Pancreas (tissue), 10 donors: ENCODE measurements at regions of chr1 and their contacts with region 1.

Region 1: DNA sequence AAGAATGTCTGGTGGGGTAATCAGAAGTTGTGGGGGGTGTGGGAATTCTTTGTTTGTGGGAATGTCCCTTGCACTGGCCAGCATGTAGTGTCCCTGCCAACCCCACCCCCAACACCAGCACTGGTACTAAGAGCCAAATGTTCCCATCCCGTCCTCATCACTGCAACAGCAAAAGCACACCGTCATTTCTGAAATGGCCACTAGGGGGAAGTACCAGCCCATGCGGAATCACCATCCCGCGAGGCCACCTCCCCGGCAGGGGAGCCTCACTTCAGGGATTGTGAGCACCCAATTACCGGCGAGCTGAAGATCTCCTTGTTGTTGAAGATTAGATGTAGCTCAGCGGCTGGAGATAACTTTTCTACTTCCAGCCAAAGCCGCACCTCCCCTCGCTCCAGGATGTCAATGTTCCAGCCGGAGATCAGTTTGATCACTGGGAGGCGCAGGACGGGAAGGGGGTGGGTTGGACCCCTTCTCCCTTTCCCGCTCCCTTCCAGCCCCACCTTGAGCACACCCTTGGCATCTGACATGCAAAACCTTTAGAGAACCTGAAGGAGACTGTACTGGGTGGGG is 41.0 kb downstream of the MYOM3 start:
- DNase-seq: peak in 5 of 6 donors; percentile 70 to 84 (median 74)
- ATAC-seq: peak; percentile 67 to 93 (median 88)
- H3K4me3 ChIP-seq: no peak overlapping the region
- H3K27ac ChIP-seq: no peak overlapping the region
- H3K4me1 ChIP-seq: no peaks in the 10 kb centered on the region
- H3K27me3 ChIP-seq: no peaks in the 10 kb centered on the region
- CTCF ChIP-seq: peak; percentile 66 to 91 (median 80)

Region 2: DNA sequence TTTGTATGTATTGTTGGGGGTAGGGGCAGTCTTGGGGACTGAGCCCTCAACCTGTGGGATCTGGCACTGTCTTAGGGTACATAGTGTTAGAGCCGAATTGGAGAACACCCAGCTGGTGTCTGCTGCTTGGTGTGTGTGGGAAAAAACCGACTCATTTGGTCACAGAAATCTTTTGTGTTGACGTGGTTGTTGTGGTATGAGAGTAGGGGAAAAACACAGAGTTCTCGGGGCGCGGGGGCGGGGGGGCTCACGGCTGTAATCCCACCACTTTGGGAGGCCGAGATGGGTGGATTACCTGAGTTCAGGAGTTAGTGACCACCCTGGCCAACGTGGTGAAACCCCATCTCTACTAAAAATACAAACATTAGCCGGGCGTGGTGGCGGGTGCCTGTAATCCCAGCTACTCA is 75.5 kb before region 1 on chr1:
- intact Hi-C with region 1: no loop called
- DNase-seq: no peak
- ATAC-seq: no peak
- H3K4me3 ChIP-seq: no peak overlapping the region
- H3K27ac ChIP-seq: no peak overlapping the region
- H3K4me1 ChIP-seq: peaks cover 0 to 6% (median 2%) of the 10 kb centered on the region in 3 donors
- H3K27me3 ChIP-seq: no peaks in the 10 kb centered on the region
- CTCF ChIP-seq: no peak

Region 3: GRCh38 chr1:24111996-24112779 is 41.3 kb after region 1 on chr1 and contains the start of gene MYOM3:
- intact Hi-C with region 1: loop called in 2 of 3 experiments (anchors 5 kb)
- DNase-seq: peak; percentile 66 to 89 (median 72)
- ATAC-seq: peak; percentile 59 to 92 (median 84)
- H3K4me3 ChIP-seq: no peak within 1 kb of the TSS
- H3K27ac ChIP-seq: no peak within 1 kb of the TSS
- H3K4me1 ChIP-seq: peaks cover 0 to 9% (median 3%) of the 10 kb centered on the region in 3 donors
- H3K27me3 ChIP-seq: no peaks in the 10 kb centered on the region
- CTCF ChIP-seq: peak in 3 of 4 donors; percentile 18 to 21 (median 19)
- total RNA-seq, gene MYOM3: 0.38 to 1.7 (median 0.79) TPM

Region 4: DNA sequence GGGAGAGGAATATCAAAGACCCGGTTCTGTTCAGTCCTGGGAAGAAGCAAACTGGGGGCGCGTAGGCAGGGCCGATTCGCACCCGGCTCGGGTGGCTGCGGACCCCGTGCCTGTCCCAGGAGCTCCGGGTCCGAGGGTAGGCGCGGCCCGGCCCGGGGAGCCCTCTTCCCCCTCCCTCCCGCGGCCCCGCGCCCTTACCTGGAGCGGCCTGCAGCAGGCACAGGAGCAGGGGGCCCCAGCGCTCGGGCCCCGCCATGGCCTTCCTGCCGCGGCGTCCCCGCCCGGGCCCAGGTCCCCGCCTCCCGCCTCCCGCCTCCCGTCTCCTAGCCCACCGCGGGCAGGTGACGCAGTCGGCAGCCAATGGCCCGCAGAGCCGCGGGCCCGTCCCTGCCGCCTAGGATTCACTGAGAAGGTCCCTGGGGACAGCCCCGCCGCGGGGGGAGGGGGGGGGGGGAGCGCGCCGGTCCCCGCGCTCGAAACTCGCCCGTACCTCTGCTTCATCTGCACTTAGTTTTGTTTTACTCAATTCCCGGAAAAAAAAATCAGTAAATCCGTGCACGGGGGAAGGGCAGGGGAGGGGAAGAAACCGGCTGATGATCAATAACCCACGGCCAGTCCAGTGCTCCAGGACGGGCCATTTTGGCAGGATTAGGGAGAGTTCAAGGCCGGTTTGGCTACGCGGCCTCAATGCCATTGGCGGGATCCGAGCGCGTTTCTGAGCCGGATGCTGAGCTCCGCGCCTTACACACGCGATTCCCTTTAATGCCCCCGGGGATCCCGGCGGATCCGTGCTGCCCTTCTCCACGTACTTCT is 116.3 kb after region 1 on chr1 and contains the start of gene IFNLR1:
- intact Hi-C with region 1: loop called in 1 of 3 experiments (anchors 10 kb)
- DNase-seq: peak; percentile 68 to 91 (median 84)
- ATAC-seq: peak; percentile 88 to 93 (median 92)
- H3K4me3 ChIP-seq: peak within 1 kb of the TSS; percentile 45 to 63 (median 57)
- H3K27ac ChIP-seq: peak within 1 kb of the TSS; percentile 85 to 88 (median 86)
- H3K4me1 ChIP-seq: peaks cover 4 to 5% (median 4%) of the 10 kb centered on the region in 3 donors
- H3K27me3 ChIP-seq: no peaks in the 10 kb centered on the region
- CTCF ChIP-seq: no peak
- total RNA-seq, gene IFNLR1: 3.0 to 8.4 (median 4.7) TPM